ENCODE measurements at regions of chr12 and their contacts with region 1.

Region 1: DNA sequence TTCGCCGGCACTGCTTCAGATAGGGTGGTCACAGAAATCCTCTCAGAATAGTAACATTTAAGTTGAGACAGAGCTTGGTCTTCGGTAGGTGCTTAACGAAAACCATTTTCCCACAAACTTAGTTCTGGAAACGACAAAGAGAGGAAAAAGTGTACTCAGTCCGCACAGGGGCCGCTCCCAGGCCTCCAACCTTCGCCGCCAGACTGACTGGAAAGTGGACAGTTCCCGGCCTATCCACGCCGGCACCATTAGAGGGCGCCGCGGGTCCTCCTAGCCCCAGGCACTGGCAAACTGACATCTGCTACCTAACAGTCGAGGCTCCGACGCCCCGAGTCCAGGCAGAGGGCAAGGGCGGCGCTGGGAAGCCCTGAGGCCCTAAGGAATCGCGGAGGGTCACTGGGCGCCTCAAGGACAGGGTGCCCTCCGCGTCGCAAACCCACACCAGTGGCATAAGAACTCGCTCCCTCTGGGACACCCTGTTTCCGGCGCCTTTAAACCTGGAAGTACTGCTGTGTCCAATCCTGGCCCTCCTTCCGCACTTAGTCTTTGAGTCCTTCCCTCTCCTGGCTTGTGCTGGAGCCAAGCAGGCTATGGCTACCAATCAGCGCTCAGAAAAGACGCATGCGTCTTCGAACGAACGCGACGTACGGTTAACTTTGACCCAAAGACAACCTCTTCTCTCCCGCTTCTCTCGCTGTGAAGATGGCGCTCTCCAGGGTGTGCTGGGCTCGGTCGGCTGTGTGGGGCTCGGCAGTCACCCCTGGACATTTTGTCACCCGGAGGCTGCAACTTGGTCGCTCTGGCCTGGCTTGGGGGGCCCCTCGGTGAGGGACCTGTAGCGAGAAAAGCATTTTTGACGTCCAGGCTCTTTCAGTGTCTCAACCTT is at the start of gene LETMD1:
- DNase-seq: peak; percentile 91
- H3K4me3 Mint-ChIP-seq: peak within 1 kb of the TSS; percentile 95
- H3K27ac Mint-ChIP-seq: peak within 1 kb of the TSS; percentile 87
- H3K4me1 Mint-ChIP-seq: peaks cover 28% of the 10 kb centered on the region
- H3K27me3 Mint-ChIP-seq: no peaks in the 10 kb centered on the region
- total RNA-seq, gene LETMD1: 70.7 and 74.3 TPM in 2 replicates

Region 2: GRCh38 chr12:50862316-50862715 is 185.6 kb before region 1 on chr12:
- intact Hi-C with region 1: no loop called
- DNase-seq: no peak
- H3K4me3 Mint-ChIP-seq: no peak overlapping the region
- H3K27ac Mint-ChIP-seq: no peak overlapping the region
- H3K4me1 Mint-ChIP-seq: peaks cover 10% of the 10 kb centered on the region
- H3K27me3 Mint-ChIP-seq: peaks cover 2% of the 10 kb centered on the region

Region 3: DNA sequence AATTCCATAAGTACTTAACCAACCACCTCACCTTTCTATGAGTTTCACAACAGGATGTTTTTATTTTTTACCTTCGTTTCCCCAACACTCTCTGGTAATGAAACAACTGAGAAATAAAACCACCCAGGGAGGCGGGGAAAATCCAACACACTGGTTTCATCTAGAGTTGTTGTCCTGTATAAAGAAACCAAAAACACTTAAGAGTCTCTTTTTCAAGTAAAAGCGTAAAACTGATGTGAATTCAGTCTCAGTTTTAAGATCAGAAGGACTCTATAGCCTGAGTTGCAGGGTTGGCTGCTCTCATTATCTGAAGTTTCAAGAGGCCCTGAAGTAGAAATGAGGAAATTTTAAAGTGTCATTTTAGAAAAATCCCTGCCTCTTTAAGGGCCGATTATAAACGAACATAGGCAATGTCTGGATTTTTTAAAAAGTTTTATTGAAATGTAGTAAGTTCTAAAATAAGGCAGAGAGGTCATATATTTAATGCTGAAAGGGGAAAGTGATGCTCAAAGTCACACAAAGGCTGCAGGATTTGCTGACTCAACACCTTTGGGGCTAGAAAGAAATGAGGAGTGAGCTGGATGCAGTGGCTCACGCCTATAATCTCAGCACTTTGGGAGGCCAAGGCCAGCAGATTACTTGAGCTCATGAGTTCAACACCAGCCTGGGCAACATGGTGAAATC is 68.4 kb before region 1 on chr12:
- intact Hi-C with region 1: loop called (anchors 2 kb)
- DNase-seq: peak; percentile 67
- H3K4me3 Mint-ChIP-seq: peak overlapping the region; percentile 71
- H3K27ac Mint-ChIP-seq: peak overlapping the region; percentile 96
- H3K4me1 Mint-ChIP-seq: peaks cover 38% of the 10 kb centered on the region
- H3K27me3 Mint-ChIP-seq: no peaks in the 10 kb centered on the region

Region 4: DNA sequence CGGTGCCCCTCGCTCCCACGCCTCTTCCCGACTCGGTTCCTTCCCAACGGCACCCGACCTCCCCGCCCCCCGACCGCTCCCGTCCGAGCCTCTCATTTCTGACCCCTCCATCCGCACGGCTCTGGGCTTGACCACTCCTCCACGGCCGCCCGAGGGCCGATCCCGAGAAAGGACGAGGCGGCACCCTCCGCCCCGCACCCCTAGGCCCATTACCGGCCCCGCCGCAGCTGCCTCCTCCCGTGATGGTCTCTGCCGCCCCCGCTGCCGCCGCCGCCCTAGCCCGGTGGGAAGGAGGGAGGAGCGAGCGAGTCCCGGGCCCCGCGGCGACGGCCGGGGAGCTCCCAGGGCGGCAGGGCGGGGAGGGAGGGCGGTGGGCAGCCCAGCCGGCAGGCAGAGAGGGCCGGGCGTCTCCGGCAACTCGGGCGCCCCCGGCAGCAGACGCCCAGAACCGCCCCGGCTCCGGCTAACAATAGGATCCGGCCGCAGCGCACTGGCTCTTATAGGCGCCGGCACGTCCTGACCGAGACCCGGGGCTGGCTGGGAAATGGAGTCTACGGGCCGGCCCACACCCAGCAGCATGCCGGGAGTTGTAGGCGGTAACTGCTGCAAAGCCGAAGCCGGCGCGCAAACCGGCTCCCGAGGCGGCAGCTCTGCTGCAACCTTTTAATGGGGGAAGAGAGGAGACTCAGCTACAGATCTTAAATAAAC is 35.4 kb after region 1 on chr12 and contains the start of gene CSRNP2:
- intact Hi-C with region 1: loop called (anchors 1 kb)
- DNase-seq: peak; percentile 94
- H3K4me3 Mint-ChIP-seq: peak within 1 kb of the TSS; percentile 99
- H3K27ac Mint-ChIP-seq: peak within 1 kb of the TSS; percentile 91
- H3K4me1 Mint-ChIP-seq: peaks cover 34% of the 10 kb centered on the region
- H3K27me3 Mint-ChIP-seq: peaks cover 3% of the 10 kb centered on the region
- total RNA-seq, gene CSRNP2: 28.6 and 35.2 TPM in 2 replicates

Region 5: DNA sequence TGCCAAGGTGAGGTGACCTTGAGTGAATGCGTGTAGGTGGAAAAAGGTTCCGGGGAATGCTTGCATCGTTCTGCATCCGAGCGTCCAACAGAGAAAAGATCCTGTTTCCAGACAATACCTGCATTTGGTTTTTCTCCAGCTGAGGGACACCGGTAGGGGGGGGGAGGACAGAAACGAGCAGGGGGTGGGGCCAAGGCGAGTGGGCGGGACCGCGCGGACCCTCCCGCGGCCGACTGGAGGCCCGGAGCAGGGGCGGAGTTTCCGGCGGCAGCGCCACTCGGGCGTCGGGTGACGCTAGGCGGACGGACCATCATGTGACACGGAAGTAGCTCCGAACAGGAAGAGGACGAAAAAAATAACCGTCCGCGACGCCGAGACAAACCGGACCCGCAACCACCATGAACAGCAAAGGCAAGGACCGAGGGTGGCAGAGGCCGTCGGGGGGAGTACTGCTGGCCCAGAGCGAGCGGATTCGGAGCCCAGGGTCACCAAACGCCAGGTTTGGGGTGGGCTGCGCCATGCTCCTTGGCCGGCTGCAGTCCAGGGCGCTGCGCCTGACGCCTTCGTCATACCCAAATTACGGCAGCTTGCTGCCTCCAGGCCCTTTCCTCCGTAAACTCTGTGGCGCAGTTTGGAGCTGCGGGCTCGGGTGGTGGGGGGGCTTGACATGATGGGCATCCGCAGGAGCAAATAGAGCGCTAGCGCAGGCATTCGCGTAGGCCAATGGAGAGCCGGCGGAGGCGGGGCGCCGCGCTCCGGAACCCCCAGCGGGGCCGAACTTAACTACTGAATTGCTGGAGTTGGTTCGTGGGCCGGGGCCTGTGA is 190.8 kb after region 1 on chr12 and contains the start of gene DAZAP2:
- intact Hi-C with region 1: loop called (anchors 1 kb)
- DNase-seq: peak; percentile 92
- H3K4me3 Mint-ChIP-seq: peak within 1 kb of the TSS; percentile 91
- H3K27ac Mint-ChIP-seq: peak within 1 kb of the TSS; percentile 99
- H3K4me1 Mint-ChIP-seq: peaks cover 45% of the 10 kb centered on the region
- H3K27me3 Mint-ChIP-seq: no peaks in the 10 kb centered on the region
- total RNA-seq, gene DAZAP2: 163 and 169 TPM in 2 replicates

Region 6: GRCh38 chr12:51326762-51327439 is 279.0 kb after region 1 on chr12:
- intact Hi-C with region 1: loop called (anchors 5 kb)
- DNase-seq: peak; percentile 6
- H3K4me3 Mint-ChIP-seq: peak overlapping the region; percentile 55
- H3K27ac Mint-ChIP-seq: peak overlapping the region; percentile 89
- H3K4me1 Mint-ChIP-seq: peaks cover 75% of the 10 kb centered on the region
- H3K27me3 Mint-ChIP-seq: no peaks in the 10 kb centered on the region

Region 7: GRCh38 chr12:51368640-51369517 is 321.0 kb after region 1 on chr12:
- intact Hi-C with region 1: loop called (anchors 1 kb)
- DNase-seq: peak; percentile 89
- H3K4me3 Mint-ChIP-seq: peak overlapping the region; percentile 56
- H3K27ac Mint-ChIP-seq: peak overlapping the region; percentile 70
- H3K4me1 Mint-ChIP-seq: peaks cover 67% of the 10 kb centered on the region
- H3K27me3 Mint-ChIP-seq: peaks cover 7% of the 10 kb centered on the region